CD8-positive, alpha-beta T cell (primary cell): ENCODE measurements at regions of chr3 and their contacts with region 1.

Region 1: DNA sequence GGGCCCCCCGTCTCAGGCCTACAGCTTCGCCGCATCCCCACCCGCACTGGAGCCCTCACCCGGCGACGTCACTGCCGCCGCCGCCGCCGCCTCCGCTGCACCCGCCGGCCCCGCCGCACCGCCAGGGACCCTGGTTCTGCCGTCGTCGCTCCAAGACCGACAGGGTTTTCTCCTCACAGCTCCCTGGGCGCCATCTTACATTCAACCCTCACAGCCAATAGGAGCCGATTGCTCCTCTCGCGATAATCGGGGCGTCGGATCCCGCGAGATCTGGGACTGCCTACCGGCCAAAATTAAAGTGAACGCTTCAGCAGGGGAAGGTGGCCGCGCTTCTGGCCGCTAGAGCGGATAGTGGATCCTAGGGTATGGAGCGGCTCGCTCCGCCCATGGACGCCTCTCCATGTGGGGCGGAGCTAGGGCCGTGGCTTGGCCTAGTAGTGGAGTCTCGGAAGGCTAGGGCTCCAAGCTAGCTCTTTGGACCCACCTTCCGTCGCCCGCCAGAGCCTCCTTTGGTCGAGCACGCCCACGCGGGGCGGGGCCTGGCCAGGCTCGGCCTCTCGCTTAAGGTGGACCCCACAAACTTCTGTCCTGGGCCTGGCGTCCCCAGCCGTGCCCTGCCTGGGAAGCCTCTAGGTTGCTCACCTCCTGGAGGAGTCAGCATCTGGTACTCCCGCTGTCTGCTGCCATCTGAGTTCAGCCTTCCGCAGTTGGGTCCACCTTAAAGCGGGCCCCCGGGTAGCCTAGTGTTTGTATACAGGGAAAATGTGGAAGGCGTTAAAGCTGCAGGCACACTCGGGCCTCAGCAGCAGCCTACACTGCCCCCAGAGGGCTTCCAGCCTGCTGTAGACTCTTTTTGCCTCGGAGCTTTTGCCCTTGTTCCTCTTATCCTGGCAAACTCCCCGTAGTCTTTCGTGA is at the start of gene QRICH1:
- DNase-seq: peak; percentile 90 to 98 (median 95)
- ATAC-seq: peak; percentile 77
- H3K4me3 ChIP-seq: peak within 1 kb of the TSS; percentile 76 to 95
- H3K4me3 Mint-ChIP-seq: peak within 1 kb of the TSS; percentile 91
- H3K27ac ChIP-seq: peak within 1 kb of the TSS; percentile 81 to 90
- H3K27ac Mint-ChIP-seq: peak within 1 kb of the TSS; percentile 99
- H3K4me1 ChIP-seq: peaks cover 33% of the 10 kb centered on the region
- H3K4me1 Mint-ChIP-seq: peaks cover 37% of the 10 kb centered on the region
- H3K27me3 ChIP-seq: no peaks in the 10 kb centered on the region
- H3K27me3 Mint-ChIP-seq: no peaks in the 10 kb centered on the region
- CTCF ChIP-seq: peak; percentile 67
- total RNA-seq, gene QRICH1: 232 to 246 TPM

Region 2: GRCh38 chr3:48635222-48636021 is 458.7 kb before region 1 on chr3 and contains the start of gene SLC26A6:
- CTCF ChIA-PET with region 1: no interaction called
- POLR2A ChIA-PET with region 1: no interaction called
- intact Hi-C with region 1: loop called in 1 of 2 experiments (anchors 1 kb)
- DNase-seq: peak; percentile 79 to 96 (median 93)
- ATAC-seq: peak; percentile 98
- H3K4me3 ChIP-seq: peak within 1 kb of the TSS; percentile 78 to 93
- H3K4me3 Mint-ChIP-seq: peak within 1 kb of the TSS; percentile 87
- H3K27ac ChIP-seq: peak within 1 kb of the TSS; percentile 34 to 64
- H3K27ac Mint-ChIP-seq: no peak within 1 kb of the TSS
- H3K4me1 ChIP-seq: peaks cover 17% of the 10 kb centered on the region
- H3K4me1 Mint-ChIP-seq: peaks cover 17% of the 10 kb centered on the region
- H3K27me3 ChIP-seq: no peaks in the 10 kb centered on the region
- H3K27me3 Mint-ChIP-seq: no peaks in the 10 kb centered on the region
- CTCF ChIP-seq: no peak
- total RNA-seq, gene SLC26A6: 10.9 to 13.5 TPM

Region 3: GRCh38 chr3:48891606-48892005 is 202.5 kb before region 1 on chr3:
- CTCF ChIA-PET with region 1: no interaction called
- POLR2A ChIA-PET with region 1: no interaction called
- intact Hi-C with region 1: no loop called
- DNase-seq: no peak
- ATAC-seq: no peak
- H3K4me3 ChIP-seq: no peak overlapping the region
- H3K4me3 Mint-ChIP-seq: no peak overlapping the region
- H3K27ac ChIP-seq: no peak overlapping the region
- H3K27ac Mint-ChIP-seq: no peak overlapping the region
- H3K4me1 ChIP-seq: peaks cover 11% of the 10 kb centered on the region
- H3K4me1 Mint-ChIP-seq: peaks cover 23% of the 10 kb centered on the region
- H3K27me3 ChIP-seq: no peaks in the 10 kb centered on the region
- H3K27me3 Mint-ChIP-seq: no peaks in the 10 kb centered on the region
- CTCF ChIP-seq: no peak

Region 4: DNA sequence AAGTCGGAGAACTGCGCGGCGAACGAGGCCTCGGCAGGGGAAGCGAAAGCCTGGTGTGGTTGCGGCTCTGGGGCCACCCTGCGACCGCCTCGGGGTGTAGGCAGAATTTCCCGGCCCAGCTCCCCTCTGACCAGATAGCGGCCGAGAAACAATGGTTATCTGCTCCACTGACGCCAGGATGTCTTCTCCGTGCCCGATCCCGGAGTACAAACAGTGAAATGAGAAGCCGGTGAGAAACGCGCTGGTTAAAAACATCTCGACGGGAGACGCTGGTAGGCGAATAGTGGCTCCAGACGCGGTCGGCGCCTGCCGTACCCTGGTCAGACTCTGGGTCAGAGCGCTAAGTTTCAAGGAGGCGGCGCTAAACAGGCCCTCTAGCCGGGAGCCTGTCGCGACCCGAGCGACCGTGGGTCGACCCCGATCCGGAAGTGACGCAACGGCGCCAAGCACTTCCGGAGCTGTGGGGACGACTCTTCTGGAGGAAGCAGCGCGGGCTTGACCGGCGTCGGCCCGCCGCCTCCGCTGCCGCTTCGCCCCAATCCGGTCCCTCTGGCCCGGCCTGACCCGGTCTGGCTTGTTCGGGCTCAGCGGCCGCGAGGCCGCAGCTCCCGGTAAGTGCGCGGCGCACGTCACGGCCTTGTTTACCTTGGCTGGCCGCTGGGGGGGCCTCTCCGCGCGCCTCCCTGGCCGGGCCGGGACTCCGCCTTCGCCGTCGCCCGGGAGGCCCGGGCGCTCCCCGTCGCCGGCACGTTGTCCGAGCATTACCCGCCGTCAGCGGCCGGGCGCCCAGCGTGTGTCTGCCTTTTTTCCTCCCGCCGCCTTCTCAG is 175.5 kb before region 1 on chr3 and contains the start of gene ARIH2:
- CTCF ChIA-PET with region 1: no interaction called
- POLR2A ChIA-PET with region 1: no interaction called
- intact Hi-C with region 1: loop called in 1 of 2 experiments (anchors 2 kb)
- DNase-seq: peak; percentile 74 to 95 (median 88)
- ATAC-seq: peak; percentile 72
- H3K4me3 ChIP-seq: peak within 1 kb of the TSS; percentile 92 to 93
- H3K4me3 Mint-ChIP-seq: peak within 1 kb of the TSS; percentile 98
- H3K27ac ChIP-seq: peak within 1 kb of the TSS; percentile 99
- H3K27ac Mint-ChIP-seq: peak within 1 kb of the TSS; percentile 99
- H3K4me1 ChIP-seq: peaks cover 22% of the 10 kb centered on the region
- H3K4me1 Mint-ChIP-seq: peaks cover 27% of the 10 kb centered on the region
- H3K27me3 ChIP-seq: no peaks in the 10 kb centered on the region
- H3K27me3 Mint-ChIP-seq: no peaks in the 10 kb centered on the region
- CTCF ChIP-seq: peak; percentile 24
- total RNA-seq, gene ARIH2: 225 to 242 TPM

Region 5: GRCh38 chr3:49021813-49022687 is 72.1 kb before region 1 on chr3 and contains the start of gene NDUFAF3:
- CTCF ChIA-PET with region 1: interaction called, 7 read pairs
- POLR2A ChIA-PET with region 1: interaction called, 20 read pairs
- intact Hi-C with region 1: loop called (anchors 1 to 2 kb)
- DNase-seq: peak; percentile 85 to 95 (median 93)
- ATAC-seq: peak; percentile 73
- H3K4me3 ChIP-seq: peak within 1 kb of the TSS; percentile 97 to 98
- H3K4me3 Mint-ChIP-seq: peak within 1 kb of the TSS; percentile 98
- H3K27ac ChIP-seq: peak within 1 kb of the TSS; percentile 98 to 99
- H3K27ac Mint-ChIP-seq: peak within 1 kb of the TSS; percentile 98
- H3K4me1 ChIP-seq: peaks cover 38% of the 10 kb centered on the region
- H3K4me1 Mint-ChIP-seq: peaks cover 43% of the 10 kb centered on the region
- H3K27me3 ChIP-seq: no peaks in the 10 kb centered on the region
- H3K27me3 Mint-ChIP-seq: no peaks in the 10 kb centered on the region
- CTCF ChIP-seq: peak; percentile 94
- total RNA-seq, gene NDUFAF3: 44.4 to 48.5 TPM

Region 6: DNA sequence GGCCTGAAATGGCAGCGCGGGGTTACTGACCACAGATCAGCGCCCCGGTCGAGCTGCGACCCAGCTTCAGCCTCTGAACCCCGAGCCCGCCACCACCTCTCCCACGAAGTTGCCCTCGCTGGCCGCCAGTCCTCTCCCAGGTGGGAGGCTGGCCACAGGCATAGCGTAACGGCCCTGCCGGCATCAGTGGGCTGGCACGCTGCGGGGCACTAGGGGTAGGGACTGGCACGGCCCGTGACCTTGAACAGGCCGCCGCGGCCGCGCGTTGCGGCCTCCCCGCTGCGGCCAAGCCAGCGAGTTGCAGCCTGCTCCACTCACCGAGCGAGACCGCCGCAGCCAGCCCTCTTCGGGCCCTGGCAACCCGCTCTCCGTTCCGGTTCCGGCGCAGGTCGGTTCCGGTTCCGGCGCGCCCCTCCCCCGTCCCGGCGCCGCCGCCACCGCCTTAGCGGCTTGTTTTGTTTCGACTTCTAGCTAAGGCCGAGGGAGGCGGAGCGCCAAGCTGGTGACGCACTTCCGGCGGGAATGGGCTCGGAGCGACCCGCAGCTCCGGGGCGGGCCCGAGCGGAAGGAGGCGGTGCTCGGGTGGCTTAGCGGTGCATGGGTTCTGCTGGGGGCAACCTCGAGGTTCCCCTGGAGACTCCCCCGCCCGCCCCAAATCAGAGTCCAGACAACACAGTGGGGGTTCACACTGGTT is 26.5 kb after region 1 on chr3 and contains the start of gene USP19:
- CTCF ChIA-PET with region 1: interaction called, 5 read pairs
- POLR2A ChIA-PET with region 1: interaction called, 45 read pairs
- intact Hi-C with region 1: loop called (anchors 1 kb)
- DNase-seq: peak; percentile 88 to 98 (median 95)
- ATAC-seq: peak; percentile 90
- H3K4me3 ChIP-seq: peak within 1 kb of the TSS; percentile 85 to 98
- H3K4me3 Mint-ChIP-seq: peak within 1 kb of the TSS; percentile 92
- H3K27ac ChIP-seq: peak within 1 kb of the TSS; percentile 86 to 97
- H3K27ac Mint-ChIP-seq: peak within 1 kb of the TSS; percentile 97
- H3K4me1 ChIP-seq: peaks cover 20% of the 10 kb centered on the region
- H3K4me1 Mint-ChIP-seq: peaks cover 24% of the 10 kb centered on the region
- H3K27me3 ChIP-seq: no peaks in the 10 kb centered on the region
- H3K27me3 Mint-ChIP-seq: no peaks in the 10 kb centered on the region
- CTCF ChIP-seq: no peak
- total RNA-seq, gene USP19: 88.6 to 90.5 TPM

Region 7: DNA sequence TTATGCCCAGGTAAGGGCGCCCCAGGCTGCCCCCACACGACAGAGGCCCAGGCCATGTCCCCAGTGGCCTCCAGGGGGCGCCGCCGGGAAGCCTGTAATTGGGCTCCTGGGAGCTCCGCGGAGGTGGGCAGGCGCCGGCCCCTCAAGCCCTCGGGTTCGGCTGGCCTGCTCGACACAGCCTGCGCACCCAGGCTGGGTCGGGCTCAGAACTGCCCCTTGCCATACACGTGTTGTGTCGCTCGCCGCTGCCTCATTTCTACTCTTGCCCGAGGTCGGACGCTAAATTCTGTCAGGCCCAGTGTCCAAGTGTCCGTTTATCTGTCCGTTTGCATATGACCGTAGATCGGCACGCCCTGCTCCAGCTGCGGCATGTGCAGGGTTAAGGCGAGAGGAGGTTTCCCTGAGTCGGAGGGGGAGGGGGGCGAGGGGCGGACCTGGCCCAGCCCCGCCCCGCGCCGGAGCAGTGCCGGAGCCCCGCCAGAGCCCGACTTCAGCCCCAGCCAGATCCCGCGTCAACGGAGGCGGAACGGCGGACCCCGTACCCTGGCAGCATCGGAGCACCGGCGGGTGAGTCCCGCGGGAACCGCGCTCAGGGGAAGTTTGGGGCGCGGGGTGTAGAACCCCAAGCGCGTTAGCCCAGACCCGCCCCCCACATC is 77.1 kb after region 1 on chr3 and contains the start of gene KLHDC8B:
- CTCF ChIA-PET with region 1: no interaction called
- POLR2A ChIA-PET with region 1: interaction called, 8 read pairs
- intact Hi-C with region 1: loop called (anchors 1 to 2 kb)
- DNase-seq: peak; percentile 68 to 90 (median 84)
- ATAC-seq: peak; percentile 85
- H3K4me3 ChIP-seq: peak within 1 kb of the TSS; percentile 72 to 88
- H3K4me3 Mint-ChIP-seq: peak within 1 kb of the TSS; percentile 89
- H3K27ac ChIP-seq: peak within 1 kb of the TSS; percentile 3 to 40
- H3K27ac Mint-ChIP-seq: peak within 1 kb of the TSS; percentile 79
- H3K4me1 ChIP-seq: peaks cover 24% of the 10 kb centered on the region
- H3K4me1 Mint-ChIP-seq: peaks cover 25% of the 10 kb centered on the region
- H3K27me3 ChIP-seq: no peaks in the 10 kb centered on the region
- H3K27me3 Mint-ChIP-seq: no peaks in the 10 kb centered on the region
- CTCF ChIP-seq: peak; percentile 97
- total RNA-seq, gene KLHDC8B: 1.1 to 1.6 TPM

Region 8: GRCh38 chr3:49673715-49674496 is 579.8 kb after region 1 on chr3 and contains the start of gene APEH:
- CTCF ChIA-PET with region 1: no interaction called
- POLR2A ChIA-PET with region 1: no interaction called
- intact Hi-C with region 1: loop called in 1 of 2 experiments (anchors 10 kb)
- DNase-seq: peak; percentile 92 to 99 (median 97)
- ATAC-seq: peak; percentile 85
- H3K4me3 ChIP-seq: peak within 1 kb of the TSS; percentile 78 to 92
- H3K4me3 Mint-ChIP-seq: peak within 1 kb of the TSS; percentile 95
- H3K27ac ChIP-seq: peak within 1 kb of the TSS; percentile 86 to 98
- H3K27ac Mint-ChIP-seq: peak within 1 kb of the TSS; percentile 97
- H3K4me1 ChIP-seq: peaks cover 20% of the 10 kb centered on the region
- H3K4me1 Mint-ChIP-seq: peaks cover 36% of the 10 kb centered on the region
- H3K27me3 ChIP-seq: no peaks in the 10 kb centered on the region
- H3K27me3 Mint-ChIP-seq: no peaks in the 10 kb centered on the region
- CTCF ChIP-seq: no peak
- total RNA-seq, gene APEH: 40.8 to 48.9 TPM